Mammary epithelial cell (primary cell): ENCODE measurements at regions of chr4 and their contacts with region 1.

Region 1: GRCh38 chr4:119692001-119692400 is 63.4 kb upstream of the PDE5A start:
- DNase-seq: peak; percentile 3
- H3K4me3 ChIP-seq: no peak overlapping the region
- H3K27ac ChIP-seq: no peak overlapping the region
- H3K4me1 ChIP-seq: no peaks in the 10 kb centered on the region
- H3K27me3 ChIP-seq: no peaks in the 10 kb centered on the region
- CTCF ChIP-seq: peak in 1 of 2 donors; percentile 42

Region 2: DNA sequence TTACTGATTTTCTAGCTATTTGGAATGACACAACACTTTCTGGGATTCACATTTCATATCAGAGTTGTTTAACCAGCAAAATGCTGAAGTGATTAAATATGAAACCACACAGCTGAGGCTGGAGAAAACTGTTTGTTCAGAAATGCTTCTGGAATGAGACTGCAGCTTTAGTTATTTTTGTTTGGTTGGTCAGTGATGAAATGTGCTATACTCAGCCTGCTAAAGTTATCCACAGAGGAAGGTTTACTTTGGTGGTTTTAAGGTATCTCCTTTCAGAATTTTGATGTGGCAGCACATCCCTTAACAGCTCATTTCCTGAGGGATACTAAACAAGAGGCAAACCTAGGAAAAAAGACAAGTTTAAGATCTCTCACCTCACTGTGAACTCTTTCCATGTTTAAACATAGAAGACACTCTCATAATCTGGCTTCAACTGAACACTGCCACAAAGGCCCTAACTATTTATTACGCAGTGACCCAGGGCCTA is 43.2 kb after region 1 on chr4:
- CTCF ChIA-PET with region 1: no interaction called
- dilution Hi-C with region 1: loop called (anchors 5 kb)
- in situ Hi-C with region 1: no loop called
- intact Hi-C with region 1: no loop called
- DNase-seq: peak; percentile 78
- H3K4me3 ChIP-seq: no peak overlapping the region
- H3K27ac ChIP-seq: no peak overlapping the region
- H3K4me1 ChIP-seq: peaks cover 12% of the 10 kb centered on the region
- H3K27me3 ChIP-seq: no peaks in the 10 kb centered on the region
- CTCF ChIP-seq: no peak